ENCODE measurements at regions of chr6 and their contacts with region 1.

Region 1: DNA sequence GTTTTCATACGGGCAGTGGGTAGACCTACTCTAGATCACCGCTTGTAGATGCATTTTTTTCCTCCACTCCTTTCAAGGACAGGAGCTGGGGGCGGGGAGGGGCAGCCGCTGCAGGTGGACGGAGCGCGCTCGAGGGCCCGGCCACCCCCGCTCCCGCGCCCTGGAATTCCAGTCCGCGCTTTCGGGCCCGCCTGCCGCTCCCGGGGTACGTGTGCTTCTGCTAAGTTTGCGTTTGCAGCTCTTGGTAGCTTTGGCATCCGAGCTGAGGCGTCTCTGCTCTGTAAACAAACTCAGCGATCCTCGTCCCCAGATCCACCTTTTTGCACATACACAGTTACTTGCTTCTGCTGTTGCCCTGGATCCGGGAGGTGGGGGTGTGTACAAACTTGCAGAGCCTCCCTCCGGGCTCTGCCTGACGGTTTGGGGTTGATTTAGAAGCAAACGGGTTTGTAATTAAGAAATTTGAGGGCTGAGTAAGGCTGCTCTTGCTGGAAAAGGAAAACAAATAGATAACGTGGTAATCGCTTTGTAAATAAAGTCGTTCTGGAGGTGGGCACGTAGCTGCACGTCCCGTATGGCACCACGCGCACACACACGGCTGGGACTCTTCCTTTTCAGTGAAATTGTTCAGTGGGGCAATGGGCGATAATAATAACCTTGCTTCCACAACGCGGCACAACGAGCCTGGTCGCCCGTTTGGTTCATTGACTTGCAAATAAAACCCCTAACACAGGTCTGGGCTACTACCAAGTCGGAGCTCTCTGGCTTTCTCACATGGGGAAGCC is 976 bp upstream of the CITED2 start:
- H3K4me3 ChIP-seq: peak overlapping the region; percentile 79
- H3K27ac ChIP-seq: peak overlapping the region; percentile 94
- H3K4me1 ChIP-seq: peaks cover 16% of the 10 kb centered on the region
- CTCF ChIP-seq: 0 out of 2 replicates have a peak, but pooled peaks have one; percentile 40

Region 2: DNA sequence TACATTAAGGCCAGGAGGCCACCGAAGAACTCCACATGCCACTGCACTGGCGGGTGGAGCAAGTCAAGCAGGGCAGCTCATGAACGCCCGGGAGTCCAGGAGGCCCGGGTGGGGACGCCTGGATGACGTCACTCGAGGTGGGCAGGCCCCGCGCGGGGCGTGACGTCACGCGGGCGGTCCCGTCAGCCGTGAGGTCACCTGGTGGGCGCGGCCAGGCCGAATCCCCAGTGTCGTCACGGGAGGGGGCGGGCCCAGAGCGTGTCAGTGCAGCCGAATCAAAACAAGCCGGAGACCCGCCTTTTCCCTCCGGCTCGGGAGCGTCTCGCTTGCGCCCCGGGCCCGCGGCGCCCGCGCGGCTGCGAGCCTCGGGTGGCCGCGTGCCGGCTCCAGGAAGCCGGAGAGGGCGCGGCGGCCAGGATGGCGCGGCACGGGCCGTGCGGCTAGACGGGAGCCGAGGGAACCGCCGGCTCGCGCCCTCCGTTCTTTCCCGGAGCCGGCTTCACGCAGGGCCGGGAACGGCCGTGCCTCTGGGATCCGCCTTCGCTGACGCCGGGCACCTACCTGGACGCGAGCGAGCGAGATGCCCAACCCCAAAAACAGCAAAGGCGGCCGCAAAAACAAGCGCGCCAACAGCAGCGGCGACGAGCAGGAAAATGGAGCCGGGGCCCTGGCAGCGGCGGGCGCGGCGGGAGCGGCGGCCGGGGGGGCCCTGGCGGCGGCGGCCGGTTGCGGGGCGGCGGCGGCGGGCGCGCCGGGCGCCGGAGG is 240.4 kb before region 1 on chr6 and contains the start of gene HECA:
- CTCF ChIA-PET with region 1: no interaction called
- POLR2A ChIA-PET with region 1: no interaction called
- H3K4me3 ChIP-seq: peak within 1 kb of the TSS; percentile 92
- H3K27ac ChIP-seq: peak within 1 kb of the TSS; percentile 86
- H3K4me1 ChIP-seq: peaks cover 10% of the 10 kb centered on the region; the same call in 1 of the 2 replicates
- CTCF ChIP-seq: no peak

Region 3: GRCh38 chr6:139164001-139164400 is 211.4 kb before region 1 on chr6:
- CTCF ChIA-PET with region 1: no interaction called
- POLR2A ChIA-PET with region 1: no interaction called
- H3K4me3 ChIP-seq: no peak overlapping the region
- H3K27ac ChIP-seq: no peak overlapping the region
- H3K4me1 ChIP-seq: peaks cover 12% of the 10 kb centered on the region
- CTCF ChIP-seq: 0 out of 2 replicates have a peak, but pooled peaks have one; percentile 12

Region 4: GRCh38 chr6:139364302-139364981 is 11.0 kb before region 1 on chr6:
- CTCF ChIA-PET with region 1: interaction called, 7 read pairs
- POLR2A ChIA-PET with region 1: interaction called, 11 read pairs
- H3K4me3 ChIP-seq: no peak overlapping the region
- H3K27ac ChIP-seq: no peak overlapping the region
- H3K4me1 ChIP-seq: peaks cover 15% of the 10 kb centered on the region
- CTCF ChIP-seq: 0 out of 2 replicates have a peak, but pooled peaks have one; percentile 28

Region 5: DNA sequence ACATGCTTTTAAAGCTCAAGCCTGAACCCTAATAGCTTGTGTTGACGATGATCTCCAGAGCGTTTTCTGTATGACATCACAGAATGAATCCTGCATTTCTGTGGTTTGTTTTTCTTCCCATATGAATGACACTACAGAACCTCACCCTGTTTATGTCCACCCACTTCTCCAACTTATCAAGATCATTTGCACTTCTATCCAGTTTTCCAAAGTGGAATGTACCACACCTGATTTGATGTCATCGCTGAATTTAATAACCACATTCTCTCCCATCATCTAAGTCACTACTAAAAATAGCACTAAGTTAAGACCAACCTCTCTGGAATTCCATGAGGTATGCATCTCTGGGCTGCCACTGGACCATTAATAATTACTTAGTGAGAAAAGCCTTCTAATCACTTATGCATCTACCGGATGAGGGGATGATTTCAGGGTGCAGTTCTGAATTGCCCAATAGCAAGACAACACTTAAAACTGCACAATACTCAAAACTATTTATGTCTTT is 32.3 kb after region 1 on chr6:
- CTCF ChIA-PET with region 1: interaction called, 3 read pairs
- POLR2A ChIA-PET with region 1: interaction called, 45 read pairs
- H3K4me3 ChIP-seq: no peak overlapping the region
- H3K27ac ChIP-seq: no peak overlapping the region
- H3K4me1 ChIP-seq: peaks cover 3% of the 10 kb centered on the region; the same call in 1 of the 2 replicates
- CTCF ChIP-seq: no peak

Region 6: DNA sequence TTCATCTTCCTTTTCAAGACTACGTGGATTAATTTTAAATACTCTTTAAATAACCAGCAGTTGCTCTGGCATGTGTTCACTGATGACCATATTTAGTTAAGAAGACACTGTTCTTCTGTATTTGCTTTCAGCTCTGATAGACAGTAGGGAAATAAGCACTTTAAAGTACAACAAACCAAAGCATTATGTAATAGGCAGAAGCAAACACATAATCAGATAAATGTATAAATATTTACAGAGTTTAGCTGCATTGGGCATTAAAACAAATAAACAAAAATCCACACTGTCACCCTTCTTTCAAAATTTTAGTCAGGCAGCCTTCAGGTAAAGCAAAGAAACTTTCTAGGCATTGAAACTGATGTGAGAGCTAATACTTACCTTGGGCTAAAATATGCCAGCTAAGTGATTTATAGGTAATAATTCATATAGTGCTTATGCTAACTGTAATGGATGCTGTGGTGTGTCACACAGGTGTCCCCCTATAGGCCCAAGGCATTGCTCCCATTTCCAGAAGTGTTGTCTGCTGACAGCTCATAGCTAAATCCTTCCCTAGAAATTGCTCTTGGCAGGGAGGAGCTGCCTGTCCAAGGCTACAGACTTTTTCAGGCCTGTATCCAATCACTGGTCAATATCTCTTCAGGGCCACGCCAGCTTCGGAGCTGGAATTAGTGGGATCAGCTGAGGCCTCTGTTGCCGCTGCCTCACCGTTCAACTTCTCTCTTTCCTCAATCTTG is 110.5 kb after region 1 on chr6:
- CTCF ChIA-PET with region 1: interaction called, 5 read pairs
- POLR2A ChIA-PET with region 1: interaction called, 12 read pairs
- H3K4me3 ChIP-seq: no peak overlapping the region
- H3K27ac ChIP-seq: no peak overlapping the region
- H3K4me1 ChIP-seq: peaks cover 3% of the 10 kb centered on the region; the same call in 1 of the 2 replicates
- CTCF ChIP-seq: no peak

Region 7: DNA sequence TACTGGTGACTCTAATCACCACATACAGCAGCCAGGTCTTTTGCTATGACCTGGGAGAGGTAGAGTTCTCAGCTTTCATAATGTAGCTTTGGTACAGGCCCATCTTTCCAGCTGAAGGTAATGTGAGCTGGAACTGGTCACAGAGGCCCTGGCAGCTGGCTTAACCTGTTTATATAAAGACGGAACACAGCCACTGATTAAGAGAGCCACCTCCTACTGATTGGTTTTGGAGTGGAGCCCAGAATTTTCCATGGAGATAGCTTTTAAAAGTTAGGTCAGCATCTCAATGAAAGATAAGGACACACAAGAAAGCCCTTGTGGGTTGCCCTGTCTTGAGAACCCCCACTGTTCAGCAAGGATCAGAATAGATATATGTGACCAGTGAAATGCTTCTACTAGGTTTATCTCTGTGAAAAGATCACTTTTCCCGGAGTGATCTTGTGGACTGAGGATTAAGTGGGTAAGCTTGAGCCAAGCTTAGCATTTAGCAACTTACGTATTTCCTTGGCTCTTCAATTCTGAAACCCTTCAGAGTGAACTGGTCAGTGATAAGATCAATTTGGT is 212.7 kb after region 1 on chr6:
- CTCF ChIA-PET with region 1: no interaction called
- POLR2A ChIA-PET with region 1: interaction called, 141 read pairs
- H3K4me3 ChIP-seq: no peak overlapping the region
- H3K27ac ChIP-seq: peak overlapping the region; percentile 45
- H3K4me1 ChIP-seq: peaks cover 17% of the 10 kb centered on the region
- CTCF ChIP-seq: no peak

Region 8: DNA sequence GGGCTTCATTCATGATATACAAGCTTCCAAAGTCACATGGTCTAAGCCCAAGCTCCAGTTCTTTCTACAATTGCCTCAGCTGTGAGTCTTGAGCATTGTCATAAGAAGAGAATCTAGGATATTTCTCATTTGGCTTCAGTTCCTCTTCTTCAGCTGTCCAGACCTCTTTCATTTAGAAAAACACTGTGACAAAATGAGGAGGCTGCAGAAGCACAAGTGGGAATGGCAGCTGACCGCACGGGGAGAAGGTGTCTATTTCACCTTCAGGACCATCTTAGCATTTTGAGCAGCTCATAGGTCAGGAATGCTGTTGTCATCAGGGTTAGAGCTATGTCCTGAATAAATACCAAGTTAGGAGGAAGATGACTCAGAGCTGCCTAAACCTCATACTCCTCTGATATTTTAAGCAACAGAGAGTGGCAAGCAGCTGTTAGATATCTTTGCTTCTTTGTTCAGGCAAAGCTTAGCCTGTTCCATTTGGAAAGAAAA is 389.1 kb after region 1 on chr6:
- CTCF ChIA-PET with region 1: no interaction called
- POLR2A ChIA-PET with region 1: interaction called, 29 read pairs
- H3K4me3 ChIP-seq: no peak overlapping the region
- H3K27ac ChIP-seq: no peak overlapping the region
- H3K4me1 ChIP-seq: no peaks in the 10 kb centered on the region; the same call in 1 of the 2 replicates
- CTCF ChIP-seq: no peak

Region 9: DNA sequence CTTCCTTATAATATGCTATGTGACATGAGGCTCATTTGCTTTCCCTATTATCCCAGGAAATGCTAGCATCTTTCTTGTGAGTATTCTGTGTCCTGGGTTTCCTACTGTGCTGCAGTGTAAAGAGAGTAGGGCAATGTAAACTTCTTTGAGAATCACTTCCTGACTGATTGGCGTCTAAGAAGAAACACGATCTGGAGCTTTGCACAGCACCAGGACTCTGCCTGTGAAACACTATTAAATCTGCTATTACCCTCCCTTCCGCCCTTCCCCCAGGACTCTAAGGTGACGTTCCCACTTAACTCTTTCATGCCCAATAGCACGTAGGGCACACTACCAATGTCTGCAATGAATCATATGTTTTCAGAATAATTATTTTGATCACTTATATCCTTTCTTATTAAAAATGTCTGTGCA is 606.4 kb after region 1 on chr6:
- CTCF ChIA-PET with region 1: interaction called, 3 read pairs
- POLR2A ChIA-PET with region 1: interaction called, 12 read pairs
- H3K4me3 ChIP-seq: no peak overlapping the region
- H3K27ac ChIP-seq: peak overlapping the region; percentile 32
- H3K4me1 ChIP-seq: peaks cover 18% of the 10 kb centered on the region
- CTCF ChIP-seq: no peak

Measured in HEK293 (cell line).